Activated CD4-positive, alpha-beta memory T cell treated with anti-CD3 and anti-CD28 coated beads, Interleukin-2, amount 10 ng/mL, durations not matched to agents 7 days and 5 days (primary cell): ENCODE measurements at regions of chr10 and their contacts with region 1.

Region 1: DNA sequence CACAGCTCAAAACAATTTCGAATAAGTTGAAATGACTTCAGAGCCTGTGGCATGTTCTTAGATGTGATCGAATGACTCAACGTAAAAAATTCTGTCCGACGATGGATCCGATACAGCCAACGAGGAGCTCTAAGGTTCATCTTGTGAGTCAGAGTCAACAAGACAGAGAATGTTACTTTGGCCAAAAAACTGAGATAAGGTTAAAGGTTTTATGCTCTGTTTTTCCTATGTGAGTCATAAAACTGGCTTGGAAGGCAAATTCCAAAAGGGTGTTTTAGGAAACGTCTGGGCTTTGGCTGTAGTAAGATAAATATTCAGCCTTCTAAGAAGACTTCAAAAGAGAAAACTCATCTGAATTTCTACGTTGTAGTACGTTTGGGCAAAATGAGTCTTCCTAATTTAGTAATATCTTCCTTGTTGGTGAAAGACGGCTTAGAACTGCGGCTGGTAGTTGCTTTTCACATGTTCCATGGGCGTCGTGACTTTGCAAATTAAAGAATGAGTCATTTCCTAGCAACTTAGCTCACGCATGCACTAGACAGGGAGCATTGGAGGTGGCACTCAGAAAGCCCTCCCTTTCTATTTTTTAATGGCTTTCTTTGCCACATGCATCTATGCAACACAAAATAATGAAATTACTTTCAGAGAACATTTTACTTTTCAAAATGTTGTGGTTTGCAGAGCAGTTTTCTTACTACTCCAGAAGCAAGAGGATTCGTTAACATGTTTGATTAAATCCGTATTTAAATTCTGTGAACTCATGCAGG is 28.2 kb downstream of the PFKP start:
- DNase-seq: peak; percentile 73
- H3K4me3 Mint-ChIP-seq: peak overlapping the region; percentile 25
- H3K27ac Mint-ChIP-seq: peak overlapping the region; percentile 89
- H3K4me1 Mint-ChIP-seq: peaks cover 73% of the 10 kb centered on the region
- H3K27me3 Mint-ChIP-seq: no peaks in the 10 kb centered on the region

Region 2: DNA sequence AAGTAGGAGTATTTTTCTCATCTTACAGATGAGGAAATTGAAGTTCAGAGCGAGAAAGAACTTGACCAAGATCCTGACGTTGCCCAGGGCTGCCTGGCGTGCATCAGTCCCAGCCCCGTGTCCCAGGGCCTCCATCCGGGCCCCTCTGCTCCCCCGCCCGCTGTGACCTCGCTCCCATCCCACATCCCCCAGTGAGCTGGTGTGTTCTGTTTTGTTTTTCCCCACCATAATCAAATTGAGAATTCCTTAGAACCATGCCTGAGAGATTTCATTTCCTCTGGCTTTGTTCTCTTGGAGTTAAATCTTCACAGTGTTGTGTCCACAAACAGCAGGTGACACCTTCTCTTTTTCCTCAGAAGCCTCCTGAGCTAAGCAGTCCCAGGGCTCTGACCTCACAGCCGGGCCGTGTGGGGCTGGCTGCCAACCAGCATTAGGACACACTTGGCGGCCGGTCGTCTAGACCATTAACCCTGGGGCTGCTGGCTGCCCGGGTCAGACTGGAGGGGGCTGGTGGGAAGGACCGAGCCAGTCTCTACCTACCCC is 16.1 kb after region 1 on chr10:
- CTCF ChIA-PET with region 1: no interaction called
- POLR2A ChIA-PET with region 1: no interaction called
- DNase-seq: no peak
- H3K4me3 Mint-ChIP-seq: no peak overlapping the region
- H3K27ac Mint-ChIP-seq: no peak overlapping the region
- H3K4me1 Mint-ChIP-seq: no peaks in the 10 kb centered on the region
- H3K27me3 Mint-ChIP-seq: no peaks in the 10 kb centered on the region

Region 3: GRCh38 chr10:3172446-3173170 is 77.1 kb after region 1 on chr10 and contains the start of gene PITRM1:
- CTCF ChIA-PET with region 1: no interaction called
- POLR2A ChIA-PET with region 1: interaction called, 12 read pairs
- DNase-seq: peak; percentile 99
- H3K4me3 Mint-ChIP-seq: peak within 1 kb of the TSS; percentile 87
- H3K27ac Mint-ChIP-seq: peak within 1 kb of the TSS; percentile 85
- H3K4me1 Mint-ChIP-seq: peaks cover 21% of the 10 kb centered on the region
- H3K27me3 Mint-ChIP-seq: peaks cover 24% of the 10 kb centered on the region
- total RNA-seq, gene PITRM1: 53.7 to 56.7 TPM

Region 4: GRCh38 chr10:3330663-3331062 is 235.1 kb after region 1 on chr10:
- CTCF ChIA-PET with region 1: no interaction called
- POLR2A ChIA-PET with region 1: no interaction called
- DNase-seq: no peak
- H3K4me3 Mint-ChIP-seq: no peak overlapping the region
- H3K27ac Mint-ChIP-seq: no peak overlapping the region
- H3K4me1 Mint-ChIP-seq: peaks cover 4% of the 10 kb centered on the region
- H3K27me3 Mint-ChIP-seq: peaks cover 8% of the 10 kb centered on the region

Region 5: GRCh38 chr10:3435671-3436070 is 340.1 kb after region 1 on chr10:
- CTCF ChIA-PET with region 1: no interaction called
- POLR2A ChIA-PET with region 1: no interaction called
- DNase-seq: no peak
- H3K4me3 Mint-ChIP-seq: no peak overlapping the region
- H3K27ac Mint-ChIP-seq: no peak overlapping the region
- H3K4me1 Mint-ChIP-seq: peaks cover 3% of the 10 kb centered on the region
- H3K27me3 Mint-ChIP-seq: peaks cover 12% of the 10 kb centered on the region